Esophagus muscularis mucosa (tissue), 4 donors: ENCODE measurements at regions of chr4 and their contacts with region 1.

Region 1: DNA sequence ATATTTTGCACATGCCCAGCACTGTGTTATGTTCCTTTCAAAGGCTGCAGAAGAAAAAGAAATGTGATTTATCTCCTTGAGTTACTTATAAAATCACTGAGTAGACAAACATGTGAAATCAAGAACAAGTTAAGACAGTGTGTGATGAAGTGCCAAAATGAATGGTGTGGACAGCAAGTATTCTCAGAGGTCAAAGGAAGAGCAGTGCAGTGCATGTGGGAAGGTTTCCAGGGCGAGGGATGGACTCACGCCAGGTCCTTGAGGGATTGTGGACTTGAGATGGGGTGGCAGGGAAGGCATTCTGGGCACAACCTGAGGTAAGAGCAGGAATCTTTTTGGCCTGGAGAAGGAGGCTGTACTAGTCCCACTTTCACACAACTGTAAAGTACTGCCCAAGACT is 115.5 kb downstream of the FNIP2 start:
- DNase-seq: no peak
- H3K4me3 ChIP-seq: no peak overlapping the region
- H3K27ac ChIP-seq: peak overlapping the region in 2 of 4 donors; percentile 9 to 23
- H3K4me1 ChIP-seq: peaks cover 11 to 17% (median 15%) of the 10 kb centered on the region in 4 donors
- H3K27me3 ChIP-seq: no peaks in the 10 kb centered on the region
- CTCF ChIP-seq: no peak
- EP300 ChIP-seq: no peak
- POLR2A ChIP-seq: no peak

Region 2: GRCh38 chr4:159006202-159006601 is 121.9 kb after region 1 on chr4:
- intact Hi-C with region 1: loop called (anchors 10 kb)
- DNase-seq: no peak
- H3K4me3 ChIP-seq: no peak overlapping the region
- H3K27ac ChIP-seq: no peak overlapping the region
- H3K4me1 ChIP-seq: peaks cover 11 to 25% (median 21%) of the 10 kb centered on the region in 4 donors
- H3K27me3 ChIP-seq: no peaks in the 10 kb centered on the region
- CTCF ChIP-seq: no peak
- EP300 ChIP-seq: no peak
- POLR2A ChIP-seq: no peak